ENCODE measurements at regions of chr1 and their contacts with region 1.

Region 1: DNA sequence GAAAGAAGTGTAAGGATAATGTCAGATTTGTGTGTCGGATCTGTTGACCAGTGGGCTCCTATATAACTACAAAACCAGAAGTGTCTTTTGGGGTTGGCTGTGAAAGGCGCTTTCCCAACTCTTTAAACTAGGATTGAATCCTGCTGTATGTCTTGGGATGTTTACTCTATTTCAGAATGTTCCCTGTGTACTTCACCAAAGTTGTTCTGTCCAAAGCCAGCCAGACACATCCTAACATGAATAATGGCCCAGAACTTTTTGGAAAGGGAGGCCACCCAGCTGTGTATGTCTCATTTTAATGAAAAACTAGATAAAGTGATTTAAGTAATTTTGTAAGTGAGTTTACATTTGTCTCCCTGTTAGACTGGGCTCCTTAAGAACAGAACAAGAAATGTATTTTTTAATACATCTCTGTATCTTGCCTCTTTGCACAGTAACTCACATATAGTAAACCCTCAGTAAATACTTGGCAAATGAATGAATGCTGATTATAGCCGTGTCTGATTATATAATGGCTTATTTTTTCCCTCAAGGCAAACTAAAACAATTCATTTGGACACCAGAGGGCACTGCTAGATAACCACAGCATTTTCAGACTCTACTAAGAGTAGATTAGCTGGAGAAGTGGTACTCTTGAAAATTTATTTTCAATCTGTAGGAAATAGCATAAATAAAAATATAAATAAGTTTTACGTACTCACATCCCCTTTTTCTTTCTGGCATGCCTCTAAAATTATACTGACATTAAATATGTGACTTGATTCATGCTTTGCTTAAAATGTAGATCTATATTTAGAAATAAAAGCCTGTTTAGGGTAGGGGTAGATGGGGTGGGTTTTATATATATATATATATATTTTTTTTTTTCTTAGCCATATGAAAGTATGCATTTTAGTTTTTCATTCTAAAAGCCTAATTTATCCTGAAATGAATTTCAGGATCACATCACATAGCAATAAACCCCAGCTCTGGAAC is 23.8 kb downstream of the TSEN15 start:
- DNase-seq: no peak
- ATAC-seq: peak; percentile 67 to 93 (median 77)
- H3K4me3 ChIP-seq: no peak overlapping the region
- H3K27ac ChIP-seq: peak overlapping the region; percentile 13
- H3K4me1 ChIP-seq: peaks cover 7% of the 10 kb centered on the region
- H3K27me3 ChIP-seq: no peaks in the 10 kb centered on the region
- CTCF ChIP-seq: peak; percentile 82

Region 2: DNA sequence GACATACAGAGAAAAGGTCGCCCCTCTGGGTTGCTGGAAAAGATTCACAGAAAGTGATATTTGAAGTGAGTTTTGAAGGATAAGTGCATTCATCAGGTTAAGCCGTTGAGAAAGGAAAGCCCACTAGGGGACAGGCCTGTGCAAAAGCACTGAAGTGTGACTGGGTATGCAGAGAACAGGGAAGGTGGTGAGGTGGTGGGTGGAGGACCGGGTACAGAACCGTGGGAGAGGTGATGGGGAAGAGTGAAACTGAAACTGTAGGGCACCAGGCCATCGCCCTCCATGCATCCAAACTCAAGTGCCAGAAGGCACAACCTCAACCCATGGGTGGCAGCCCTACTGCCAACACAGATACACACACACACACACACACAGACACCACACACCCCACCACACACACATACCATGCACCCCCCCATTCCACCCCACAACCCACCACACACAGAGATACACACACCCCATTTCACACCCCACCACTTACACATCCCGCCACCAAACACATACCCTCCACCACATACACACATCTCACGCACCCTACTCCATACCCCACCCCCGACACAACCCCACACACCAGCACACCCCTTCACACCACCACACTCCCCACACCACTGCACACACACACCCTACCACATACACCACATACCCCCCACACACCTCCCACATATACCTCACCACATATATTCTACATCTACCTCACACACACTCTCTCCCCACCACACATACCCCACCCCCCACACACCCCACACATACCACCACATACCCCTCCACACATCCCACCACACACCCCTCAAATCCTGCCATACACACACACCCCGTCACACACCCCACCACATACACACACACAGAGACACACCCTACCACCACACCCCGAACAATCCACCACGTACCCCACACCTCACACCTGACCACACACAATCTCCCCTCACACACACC is 35.2 kb after region 1 on chr1:
- intact Hi-C with region 1: no loop called
- DNase-seq: no peak
- ATAC-seq: no peak
- H3K4me3 ChIP-seq: no peak overlapping the region
- H3K27ac ChIP-seq: no peak overlapping the region
- H3K4me1 ChIP-seq: no peaks in the 10 kb centered on the region
- H3K27me3 ChIP-seq: no peaks in the 10 kb centered on the region
- CTCF ChIP-seq: no peak

Region 3: DNA sequence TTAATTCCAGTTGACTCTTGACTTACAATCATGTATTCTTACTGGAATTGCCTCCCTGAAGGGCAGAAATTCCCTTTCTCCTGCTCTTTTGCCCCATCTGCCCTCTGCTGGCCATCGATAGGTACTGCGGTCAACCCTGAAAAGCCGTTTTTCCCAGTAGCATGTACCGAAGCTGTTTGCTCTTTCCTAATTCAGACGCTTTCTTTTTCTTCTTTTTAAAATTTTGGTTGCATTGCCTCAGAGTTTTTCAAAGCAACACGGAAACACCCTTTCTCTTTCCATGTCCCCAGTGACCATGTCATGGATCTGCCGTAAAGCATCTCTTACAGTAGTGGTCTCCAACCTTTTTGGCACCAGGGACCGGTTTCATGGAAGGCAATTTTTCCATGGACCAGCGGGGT is 147.3 kb after region 1 on chr1:
- intact Hi-C with region 1: loop called (anchors 1 to 2 kb)
- DNase-seq: peak; percentile 43 to 67
- ATAC-seq: peak; percentile 72 to 86 (median 78)
- H3K4me3 ChIP-seq: peak overlapping the region; percentile 42
- H3K27ac ChIP-seq: no peak overlapping the region
- H3K4me1 ChIP-seq: no peaks in the 10 kb centered on the region
- H3K27me3 ChIP-seq: no peaks in the 10 kb centered on the region
- CTCF ChIP-seq: peak; percentile 98

Region 4: DNA sequence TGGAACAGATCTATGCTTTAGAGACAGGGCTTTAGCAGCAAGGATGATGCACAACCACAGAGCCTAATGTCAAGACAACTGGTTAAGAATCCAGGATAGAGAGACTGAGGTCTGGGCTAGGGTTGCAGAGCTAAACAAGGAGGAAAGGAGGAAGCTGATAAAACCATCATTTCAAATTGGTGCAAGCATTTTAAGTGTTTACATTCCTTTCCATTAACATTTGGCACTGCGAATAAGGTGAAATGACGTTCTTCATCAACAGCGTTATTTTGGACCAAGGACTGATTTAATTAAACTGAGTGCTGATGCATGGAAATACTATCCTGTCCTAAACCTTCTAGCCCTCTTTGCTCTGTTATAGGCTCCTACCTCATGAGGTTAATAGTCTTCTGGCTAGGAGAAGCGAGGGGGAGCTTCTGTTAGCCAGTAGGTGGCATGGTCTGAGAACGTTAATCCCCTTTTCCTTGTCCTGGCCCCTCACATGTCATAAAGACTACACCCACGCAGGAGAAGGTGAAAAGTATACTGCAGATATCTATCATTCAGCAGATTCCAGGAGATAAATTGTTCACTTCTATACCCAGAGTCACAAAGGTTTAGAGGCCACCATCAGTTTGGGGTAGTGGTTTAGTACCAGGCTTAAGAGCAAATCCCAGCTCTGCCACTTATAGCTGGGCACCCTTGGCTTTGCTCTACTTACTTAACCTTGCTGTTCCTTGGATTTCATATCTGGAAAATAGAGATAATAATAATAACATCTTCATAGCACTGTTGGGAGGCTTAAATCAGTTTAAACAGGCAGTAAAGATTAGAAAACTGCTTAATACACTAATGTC is 304.0 kb after region 1 on chr1:
- intact Hi-C with region 1: loop called in 1 of 2 experiments (anchors 10 kb)
- DNase-seq: no peak
- ATAC-seq: peak; percentile 28 to 91 (median 86)
- H3K4me3 ChIP-seq: no peak overlapping the region
- H3K27ac ChIP-seq: no peak overlapping the region
- H3K4me1 ChIP-seq: peaks cover 6% of the 10 kb centered on the region
- H3K27me3 ChIP-seq: no peaks in the 10 kb centered on the region
- CTCF ChIP-seq: peak; percentile 24

Region 5: GRCh38 chr1:184691719-184692324 is 616.5 kb after region 1 on chr1:
- intact Hi-C with region 1: loop called (anchors 2 to 5 kb)
- DNase-seq: no peak
- ATAC-seq: peak in 2 of 4 donors; percentile 73 to 84
- H3K4me3 ChIP-seq: no peak overlapping the region
- H3K27ac ChIP-seq: no peak overlapping the region
- H3K4me1 ChIP-seq: no peaks in the 10 kb centered on the region
- H3K27me3 ChIP-seq: no peaks in the 10 kb centered on the region
- CTCF ChIP-seq: peak; percentile 71

Region 6: GRCh38 chr1:184771190-184771691 is 695.9 kb after region 1 on chr1:
- intact Hi-C with region 1: no loop called
- DNase-seq: no peak
- ATAC-seq: no peak
- H3K4me3 ChIP-seq: no peak overlapping the region
- H3K27ac ChIP-seq: no peak overlapping the region
- H3K4me1 ChIP-seq: no peaks in the 10 kb centered on the region
- H3K27me3 ChIP-seq: no peaks in the 10 kb centered on the region
- CTCF ChIP-seq: no peak

Measured in psoas muscle (tissue), 8 donors.